ENCODE measurements at regions of chr5 and their contacts with region 1.

Region 1: DNA sequence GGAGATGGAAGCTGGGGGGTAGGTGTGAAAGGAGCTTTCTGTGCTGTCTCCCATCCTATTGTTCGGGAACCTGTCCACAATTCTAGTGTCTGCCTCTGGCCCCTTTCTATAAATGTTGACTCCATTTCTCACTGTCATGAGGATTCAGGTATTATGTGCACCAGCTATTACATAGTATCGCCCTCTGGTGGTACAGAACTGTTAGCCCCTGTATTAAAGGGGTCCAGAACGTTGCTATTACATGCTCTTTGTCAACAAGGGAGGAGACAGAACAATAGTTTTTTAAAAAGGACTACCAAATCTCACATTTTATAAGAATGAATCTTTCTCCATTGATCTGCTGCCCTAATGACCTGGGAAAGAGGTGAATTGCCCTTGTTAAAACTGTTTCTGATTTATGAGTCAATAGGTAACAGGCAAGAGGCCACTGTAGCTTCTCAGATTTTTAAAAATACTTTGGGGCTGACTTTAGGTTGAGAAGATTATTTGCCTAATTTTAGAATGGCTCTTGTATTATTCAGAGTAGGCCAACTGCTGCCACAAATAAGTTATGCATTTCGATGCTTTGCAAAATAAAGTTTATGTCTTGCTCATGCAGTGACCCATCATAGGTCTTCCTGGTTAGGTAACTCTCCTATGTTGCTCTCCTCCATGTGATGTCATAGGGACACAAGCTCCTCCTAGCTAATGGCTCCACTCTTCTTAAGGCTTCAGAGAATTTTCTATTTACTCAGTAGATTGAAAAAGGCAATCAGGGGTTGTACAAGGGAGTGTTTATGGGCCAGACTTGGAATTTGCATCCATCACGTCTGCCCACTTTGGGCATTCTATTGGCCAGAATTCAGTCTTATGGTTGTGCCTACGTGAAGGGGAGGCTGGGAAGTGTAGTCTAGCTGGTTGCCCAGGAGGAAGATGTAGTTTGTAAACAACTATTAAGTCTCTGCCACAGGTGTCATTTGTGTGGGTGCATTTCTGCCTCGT is 20.8 kb downstream of the DCANP1 start:
- DNase-seq: peak in 7 of 9 donors; percentile 4 to 57 (median 31)
- ATAC-seq: peak; percentile 88
- H3K4me3 ChIP-seq: no peak overlapping the region
- H3K4me3 Mint-ChIP-seq: peak overlapping the region in 1 of 10 donors; percentile 79
- H3K27ac ChIP-seq: no peak overlapping the region
- H3K27ac Mint-ChIP-seq: peak overlapping the region in 3 of 9 donors; percentile 14 to 92 (median 48)
- H3K4me1 ChIP-seq: peaks cover 0 to 6% of the 10 kb centered on the region in 2 donors
- H3K4me1 Mint-ChIP-seq: peaks cover 0 to 28% (median 6%) of the 10 kb centered on the region in 7 donors
- H3K27me3 ChIP-seq: no peaks in the 10 kb centered on the region
- H3K27me3 Mint-ChIP-seq: peaks cover 7 to 25% (median 13%) of the 10 kb centered on the region in 5 donors

Region 2: GRCh38 chr5:135269931-135270421 is 156.4 kb before region 1 on chr5:
- CTCF ChIA-PET with region 1: no interaction called
- POLR2A ChIA-PET with region 1: no interaction called
- intact Hi-C with region 1: no loop called
- DNase-seq: no peak
- ATAC-seq: no peak
- H3K4me3 ChIP-seq: no peak overlapping the region
- H3K4me3 Mint-ChIP-seq: no peak overlapping the region
- H3K27ac ChIP-seq: no peak overlapping the region
- H3K27ac Mint-ChIP-seq: no peak overlapping the region
- H3K4me1 ChIP-seq: no peaks in the 10 kb centered on the region
- H3K4me1 Mint-ChIP-seq: no peaks in the 10 kb centered on the region
- H3K27me3 ChIP-seq: no peaks in the 10 kb centered on the region
- H3K27me3 Mint-ChIP-seq: peaks cover 0 to 20% (median 8%) of the 10 kb centered on the region in 5 donors

Region 3: DNA sequence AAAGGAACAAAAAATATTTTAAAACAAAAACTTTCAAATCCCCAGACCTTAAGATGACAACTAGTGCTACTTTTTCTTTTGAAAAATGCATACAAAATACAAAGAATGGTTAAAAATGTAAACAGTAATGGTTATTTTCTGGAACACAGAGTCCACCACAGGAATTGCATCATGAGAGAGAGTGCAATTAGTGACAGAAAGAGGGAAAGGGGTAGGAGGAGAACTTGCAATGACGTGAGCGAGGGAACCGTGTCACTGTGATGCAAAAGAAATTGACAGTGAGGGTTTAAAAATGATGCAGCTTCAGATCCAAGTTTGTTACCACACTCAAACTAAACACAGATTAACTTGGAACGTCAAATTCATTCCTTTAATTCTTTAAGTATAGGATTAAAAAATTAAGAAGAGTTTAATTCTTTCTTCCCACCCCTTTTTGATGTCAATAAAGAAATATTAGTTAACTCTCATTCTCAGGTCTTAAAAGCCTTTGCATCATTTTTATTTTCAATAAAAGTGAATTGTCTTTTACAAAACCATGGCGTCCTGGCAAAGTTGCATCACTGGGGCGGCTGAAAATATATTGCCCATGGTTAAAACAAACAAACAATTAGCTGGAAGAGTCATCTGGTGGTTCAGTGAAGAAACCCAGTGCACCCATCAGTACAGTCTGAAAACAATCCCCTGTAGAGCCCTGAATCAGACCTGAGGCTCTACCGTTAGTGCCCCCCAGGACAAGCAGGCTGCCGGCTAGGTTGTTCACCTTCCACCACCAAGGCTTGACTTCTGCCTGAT is 66.8 kb before region 1 on chr5:
- CTCF ChIA-PET with region 1: interaction called, 7 read pairs
- POLR2A ChIA-PET with region 1: no interaction called
- intact Hi-C with region 1: loop called (anchors 1 to 5 kb)
- DNase-seq: no peak
- ATAC-seq: no peak
- H3K4me3 ChIP-seq: no peak overlapping the region
- H3K4me3 Mint-ChIP-seq: no peak overlapping the region
- H3K27ac ChIP-seq: no peak overlapping the region
- H3K27ac Mint-ChIP-seq: peak overlapping the region in 5 of 9 donors; percentile 26 to 83 (median 48)
- H3K4me1 ChIP-seq: peaks cover 0 to 3% of the 10 kb centered on the region in 2 donors
- H3K4me1 Mint-ChIP-seq: peaks cover 9 to 42% (median 22%) of the 10 kb centered on the region in 7 donors
- H3K27me3 ChIP-seq: no peaks in the 10 kb centered on the region
- H3K27me3 Mint-ChIP-seq: no peaks in the 10 kb centered on the region

Region 4: DNA sequence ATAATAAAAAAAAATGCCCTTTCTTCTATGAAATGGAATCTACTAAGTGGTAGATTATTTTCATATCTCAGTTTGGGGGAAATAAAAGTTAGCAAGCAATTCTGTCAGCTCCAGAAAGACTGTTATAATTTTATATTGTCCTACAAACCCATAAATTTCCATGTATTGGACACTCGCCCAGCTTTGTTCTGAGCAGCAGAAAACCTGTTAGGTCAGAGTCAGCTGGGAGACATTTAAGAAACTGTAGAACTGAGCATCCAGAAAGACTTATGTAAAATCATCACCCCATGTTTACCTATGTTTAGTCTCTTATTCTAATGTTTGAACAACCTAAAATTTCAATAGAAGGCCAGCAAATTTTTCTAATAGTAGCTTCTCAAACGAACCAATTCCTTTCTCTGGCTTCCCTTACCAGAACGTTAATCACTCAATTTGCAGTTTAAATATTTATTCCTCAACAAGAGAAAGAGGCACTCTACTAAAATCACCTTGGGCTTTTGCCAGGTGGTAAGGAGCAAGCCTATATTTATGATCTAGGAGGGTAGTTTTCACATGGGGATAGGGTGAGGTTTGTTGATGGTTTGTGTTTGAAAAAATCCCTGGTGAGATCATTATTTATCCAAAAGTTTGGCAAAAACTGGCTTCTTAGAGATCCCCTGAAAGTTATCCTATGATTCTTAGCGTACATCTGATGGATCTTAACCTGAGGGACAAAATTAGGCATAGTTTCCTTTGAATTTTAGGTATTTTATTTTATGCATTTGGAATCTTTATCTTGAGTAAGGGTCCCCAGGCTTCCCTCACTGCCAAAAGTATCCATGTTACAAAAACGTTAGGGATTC is 61.8 kb before region 1 on chr5:
- CTCF ChIA-PET with region 1: interaction called, 7 read pairs
- POLR2A ChIA-PET with region 1: no interaction called
- intact Hi-C with region 1: loop called (anchors 1 to 5 kb)
- DNase-seq: no peak
- ATAC-seq: no peak
- H3K4me3 ChIP-seq: no peak overlapping the region
- H3K4me3 Mint-ChIP-seq: no peak overlapping the region
- H3K27ac ChIP-seq: no peak overlapping the region
- H3K27ac Mint-ChIP-seq: peak overlapping the region in 2 of 9 donors; percentile 5 to 18
- H3K4me1 ChIP-seq: peaks cover 0 to 3% of the 10 kb centered on the region in 2 donors
- H3K4me1 Mint-ChIP-seq: peaks cover 5 to 47% (median 22%) of the 10 kb centered on the region in 7 donors
- H3K27me3 ChIP-seq: no peaks in the 10 kb centered on the region
- H3K27me3 Mint-ChIP-seq: no peaks in the 10 kb centered on the region

Region 5: GRCh38 chr5:135393691-135394090 is 32.7 kb before region 1 on chr5:
- CTCF ChIA-PET with region 1: interaction called, 11 read pairs
- POLR2A ChIA-PET with region 1: no interaction called
- intact Hi-C with region 1: loop called in 1 of 2 experiments (anchors 2 kb)
- DNase-seq: no peak
- ATAC-seq: no peak
- H3K4me3 ChIP-seq: no peak overlapping the region
- H3K4me3 Mint-ChIP-seq: peak overlapping the region in 1 of 10 donors; percentile 14
- H3K27ac ChIP-seq: no peak overlapping the region
- H3K27ac Mint-ChIP-seq: no peak overlapping the region
- H3K4me1 ChIP-seq: peaks cover 14 to 48% of the 10 kb centered on the region in 2 donors
- H3K4me1 Mint-ChIP-seq: peaks cover 70 to 90% (median 85%) of the 10 kb centered on the region in 7 donors
- H3K27me3 ChIP-seq: no peaks in the 10 kb centered on the region
- H3K27me3 Mint-ChIP-seq: no peaks in the 10 kb centered on the region

Region 6: DNA sequence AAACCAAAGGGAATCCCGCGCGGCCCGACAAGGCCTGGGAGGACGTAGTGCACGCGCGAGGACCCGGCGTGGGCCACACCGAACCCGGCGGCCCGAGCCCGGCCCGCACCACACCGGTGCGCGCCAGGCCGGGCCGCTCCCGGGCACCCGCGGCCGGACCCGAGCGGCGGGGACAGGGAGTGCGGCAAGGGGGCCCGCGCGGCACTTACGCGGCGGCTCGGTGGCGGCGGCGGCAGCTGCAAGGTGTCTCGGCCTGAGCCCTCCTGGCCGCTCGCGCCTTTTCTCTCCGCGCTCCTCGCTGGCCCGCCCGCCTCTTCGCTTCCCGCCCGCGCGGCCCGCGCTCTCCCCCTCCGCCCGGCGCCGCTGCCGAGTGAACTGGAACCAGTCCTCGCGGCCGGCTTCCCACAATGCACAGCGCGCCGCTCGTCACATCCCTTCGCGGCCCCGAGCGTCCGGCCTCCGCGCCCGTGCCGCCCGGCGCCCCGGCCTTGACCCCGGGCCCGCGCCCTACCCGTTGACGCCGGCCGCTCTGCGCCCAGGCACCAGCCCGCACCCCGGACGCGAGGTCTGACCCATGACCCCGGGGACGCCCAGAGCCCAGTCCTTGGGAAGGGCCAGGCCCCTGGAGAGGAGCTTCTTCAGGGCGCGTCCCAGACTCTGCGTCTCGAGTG is 27.4 kb before region 1 on chr5 and contains the start of gene MACROH2A1:
- CTCF ChIA-PET with region 1: interaction called, 11 read pairs
- POLR2A ChIA-PET with region 1: no interaction called
- intact Hi-C with region 1: loop called (anchors 1 to 2 kb)
- DNase-seq: peak; percentile 66 to 88 (median 76)
- ATAC-seq: peak; percentile 94
- H3K4me3 ChIP-seq: peak within 1 kb of the TSS; percentile 66
- H3K4me3 Mint-ChIP-seq: peak within 1 kb of the TSS; percentile 79 to 95 (median 92)
- H3K27ac ChIP-seq: peak within 1 kb of the TSS; percentile 75
- H3K27ac Mint-ChIP-seq: peak within 1 kb of the TSS; percentile 76 to 96 (median 85)
- H3K4me1 ChIP-seq: peaks cover 17 to 31% of the 10 kb centered on the region in 2 donors
- H3K4me1 Mint-ChIP-seq: peaks cover 33 to 58% (median 53%) of the 10 kb centered on the region in 7 donors
- H3K27me3 ChIP-seq: no peaks in the 10 kb centered on the region
- H3K27me3 Mint-ChIP-seq: peaks cover 0 to 14% (median 0%) of the 10 kb centered on the region in 5 donors
- total RNA-seq, gene MACROH2A1: 109 to 288 (median 140) TPM

Measured in naive thymus-derived CD4-positive, alpha-beta T cell (primary cell).